ENCODE measurements at regions of chr10 and their contacts with region 1.

Region 1: GRCh38 chr10:97914837-97915211 is 65.2 kb downstream of the GOLGA7B start:
- DNase-seq: peak; percentile 86
- ATAC-seq: peak; percentile 96
- H3K4me3 Mint-ChIP-seq: no peak overlapping the region
- H3K27ac Mint-ChIP-seq: no peak overlapping the region
- H3K4me1 Mint-ChIP-seq: peaks cover 7% of the 10 kb centered on the region
- H3K27me3 Mint-ChIP-seq: peaks cover 9% of the 10 kb centered on the region
- CTCF ChIP-seq: peak; percentile 96

Region 2: DNA sequence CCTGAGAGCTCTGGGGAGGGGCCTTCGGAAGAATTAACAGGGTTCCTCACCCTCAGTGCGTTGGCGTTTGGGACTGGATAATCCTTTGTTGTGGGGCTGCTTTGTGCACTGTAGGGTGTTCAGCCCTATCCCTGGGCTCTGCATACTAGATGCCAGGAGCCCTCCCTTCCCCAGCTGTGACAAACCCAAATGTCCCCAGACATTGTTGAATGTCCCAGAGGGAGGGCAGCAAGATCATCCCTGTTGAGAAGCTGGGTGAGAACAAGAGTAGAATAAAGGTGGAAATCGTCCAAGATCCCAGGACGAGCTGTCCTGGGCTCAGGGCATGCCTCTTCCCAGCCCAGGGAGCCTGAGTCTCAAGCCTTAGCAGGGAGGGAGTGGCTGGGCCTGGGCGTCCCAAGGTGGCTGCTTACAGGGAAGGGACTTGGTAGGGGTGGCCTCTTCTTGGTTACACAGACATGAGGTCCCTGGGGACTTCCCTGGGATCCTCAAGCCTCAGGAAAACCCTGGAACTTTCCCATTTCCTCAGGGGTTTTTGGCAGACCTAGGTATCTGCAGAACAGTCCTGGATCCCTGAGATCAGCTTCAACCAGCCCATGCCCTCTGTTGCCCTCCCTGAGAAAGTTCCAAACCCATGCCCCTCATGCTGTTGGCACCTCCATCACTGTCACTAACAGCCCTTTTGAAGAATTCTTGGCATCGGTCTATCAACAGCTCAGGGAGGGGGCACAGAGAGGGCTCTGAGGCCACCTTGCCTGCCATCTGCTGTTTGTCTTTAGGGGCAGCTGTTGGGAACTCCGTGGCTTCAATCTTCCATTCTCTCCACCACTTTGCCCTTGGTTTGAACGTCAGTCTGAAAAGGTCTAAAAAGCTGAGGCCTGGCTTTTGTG is 11.5 kb before region 1 on chr10:
- CTCF ChIA-PET with region 1: interaction called, 13 read pairs
- POLR2A ChIA-PET with region 1: interaction called, 3 read pairs
- intact Hi-C with region 1: no loop called
- DNase-seq: no peak
- ATAC-seq: no peak
- H3K4me3 Mint-ChIP-seq: no peak overlapping the region
- H3K27ac Mint-ChIP-seq: no peak overlapping the region
- H3K4me1 Mint-ChIP-seq: no peaks in the 10 kb centered on the region
- H3K27me3 Mint-ChIP-seq: peaks cover 3% of the 10 kb centered on the region
- CTCF ChIP-seq: no peak

Region 3: DNA sequence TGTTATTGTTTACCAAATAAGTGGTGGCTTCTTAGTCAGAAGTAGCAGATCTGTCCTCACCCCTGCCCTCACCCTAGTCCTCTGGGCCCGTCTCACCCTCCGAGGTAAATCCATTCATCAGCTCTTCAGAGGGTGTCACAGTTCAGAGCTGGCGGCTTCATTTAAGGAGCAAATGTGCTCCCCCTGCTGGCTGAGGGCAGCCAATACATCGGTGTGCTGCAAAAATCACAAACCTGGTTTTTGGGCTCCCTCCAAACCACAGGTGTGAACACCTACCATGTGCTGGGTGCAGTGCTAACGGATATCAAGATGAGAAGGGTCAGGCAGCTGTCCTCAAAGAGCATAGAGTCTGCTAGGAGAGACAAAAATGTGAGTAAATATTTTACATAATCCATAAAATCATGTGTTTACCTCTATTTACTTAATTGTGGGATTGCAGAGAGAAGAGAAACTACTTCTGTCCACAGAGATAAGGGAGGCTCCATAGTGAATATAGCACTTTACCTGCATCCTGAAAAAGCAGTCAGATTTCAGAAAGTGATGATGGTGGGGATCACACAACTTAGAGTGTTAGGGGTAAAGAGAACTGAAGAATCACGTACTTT is 131.1 kb after region 1 on chr10:
- CTCF ChIA-PET with region 1: interaction called, 93 read pairs
- POLR2A ChIA-PET with region 1: interaction called, 3 read pairs
- intact Hi-C with region 1: loop called (anchors 5 kb)
- DNase-seq: peak; percentile 74
- ATAC-seq: peak; percentile 97
- H3K4me3 Mint-ChIP-seq: no peak overlapping the region
- H3K27ac Mint-ChIP-seq: no peak overlapping the region
- H3K4me1 Mint-ChIP-seq: peaks cover 4% of the 10 kb centered on the region
- H3K27me3 Mint-ChIP-seq: peaks cover 28% of the 10 kb centered on the region
- CTCF ChIP-seq: peak; percentile 83